ENCODE measurements at regions of chr2 and their contacts with region 1.

Region 1: DNA sequence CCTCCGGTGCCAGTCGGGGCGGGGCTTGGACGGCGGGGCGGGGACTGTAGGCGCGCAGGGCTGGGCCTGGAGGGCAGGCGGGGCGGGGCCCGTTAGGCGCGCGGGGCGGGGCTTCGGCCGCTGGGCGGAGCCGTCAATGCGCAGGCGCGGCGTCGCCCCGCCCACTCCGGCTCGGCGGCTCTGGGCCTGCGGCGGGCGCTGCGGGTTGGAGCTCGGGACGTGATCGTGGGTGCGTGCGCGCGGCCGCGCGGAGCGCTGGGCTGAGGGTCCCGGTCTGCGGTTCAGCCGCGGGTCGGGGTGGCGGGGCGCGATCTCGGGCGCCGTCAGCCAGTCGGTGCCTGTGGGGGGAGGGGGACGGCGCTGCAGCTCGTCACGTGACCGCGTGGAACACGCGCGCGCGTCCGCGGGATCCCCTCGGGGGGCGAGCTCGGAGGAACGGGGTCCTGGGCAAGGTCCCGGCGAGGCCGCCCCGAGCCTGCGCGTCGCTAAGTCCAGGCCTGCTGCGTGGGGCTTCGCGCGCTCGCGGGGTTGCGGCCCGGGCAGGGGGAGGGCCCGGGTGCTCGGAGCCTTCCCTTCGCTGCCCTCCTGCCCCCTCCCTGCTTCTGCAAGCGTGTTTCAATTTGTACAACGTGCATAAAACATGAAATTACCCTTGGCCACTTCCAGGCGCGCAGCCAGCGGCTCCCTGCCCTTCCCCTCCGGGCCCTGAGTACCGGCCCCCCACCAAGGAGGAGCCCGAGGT is at the start of gene D2HGDH:
- DNase-seq: peak; percentile 80
- ATAC-seq: peak; percentile 81
- H3K4me3 ChIP-seq: peak within 1 kb of the TSS; percentile 80 to 100 (median 96)
- H3K27ac ChIP-seq: peak within 1 kb of the TSS; percentile 91
- H3K4me1 ChIP-seq: peaks cover 28% of the 10 kb centered on the region
- H3K27me3 ChIP-seq: no peaks in the 10 kb centered on the region; a peak in 2 of 5 replicates
- CTCF ChIP-seq: no peak
- EP300 ChIP-seq: peak in 1 of 2 experiments; percentile 4; a peak in 1 of 4 replicates
- POLR2A ChIP-seq: peak in 1 of 2 experiments; percentile 75; a peak in 1 of 4 replicates
- RAD21 ChIP-seq: peak; percentile 64
- total RNA-seq, gene D2HGDH: 10.2 and 20.3 TPM in 2 replicates

Region 2: DNA sequence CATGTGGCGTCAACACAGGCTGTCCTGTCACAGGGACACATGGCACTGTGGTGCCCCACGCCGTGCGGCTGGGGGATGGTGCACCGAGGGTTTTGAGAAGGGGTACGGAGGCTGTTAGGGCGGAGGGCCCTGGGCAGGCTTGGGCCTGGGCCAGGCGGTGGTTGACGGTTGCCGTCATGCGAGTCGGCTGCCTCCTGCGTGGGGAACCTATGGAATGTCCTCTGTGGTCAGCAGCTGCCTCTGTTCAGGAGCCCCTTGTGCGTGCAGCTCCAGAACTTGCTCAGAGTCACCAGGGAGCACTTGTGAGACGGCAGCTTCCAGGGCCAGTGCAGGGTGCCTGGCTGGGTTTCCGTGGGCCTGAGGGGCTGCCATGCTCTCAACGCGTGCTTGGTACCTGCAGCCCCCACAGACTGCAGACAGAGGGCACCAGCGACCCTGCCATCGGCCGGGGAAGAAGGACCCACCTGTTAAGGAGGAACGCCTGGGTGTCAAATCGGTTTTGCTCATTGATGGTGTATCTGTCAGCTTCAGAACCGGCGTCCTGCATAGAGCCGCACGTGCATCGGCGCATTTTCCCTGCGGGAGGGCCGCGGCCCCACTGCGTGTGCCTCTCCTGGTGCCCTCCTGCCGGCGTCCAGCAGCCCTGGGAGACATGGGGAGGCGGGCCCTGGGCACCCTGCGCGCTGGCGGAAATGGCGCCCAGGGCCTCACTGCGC is 10.2 kb before region 1 on chr2:
- CTCF ChIA-PET with region 1: no interaction called
- POLR2A ChIA-PET with region 1: interaction called, 13 read pairs
- in situ Hi-C with region 1: no loop called
- intact Hi-C with region 1: no loop called
- DNase-seq: no peak
- ATAC-seq: peak; percentile 61
- H3K4me3 ChIP-seq: no peak overlapping the region
- H3K27ac ChIP-seq: no peak overlapping the region
- H3K4me1 ChIP-seq: no peaks in the 10 kb centered on the region
- H3K27me3 ChIP-seq: no peaks in the 10 kb centered on the region
- CTCF ChIP-seq: peak; percentile 89
- EP300 ChIP-seq: no peak
- POLR2A ChIP-seq: no peak
- RAD21 ChIP-seq: peak; percentile 74

Region 3: GRCh38 chr2:241810307-241811210 is 75.9 kb after region 1 on chr2:
- CTCF ChIA-PET with region 1: no interaction called
- POLR2A ChIA-PET with region 1: interaction called, 25 read pairs
- in situ Hi-C with region 1: no loop called
- intact Hi-C with region 1: no loop called
- DNase-seq: no peak
- ATAC-seq: no peak
- H3K4me3 ChIP-seq: peak overlapping the region; percentile 73 to 85 (median 81)
- H3K27ac ChIP-seq: peak overlapping the region; percentile 84
- H3K4me1 ChIP-seq: peaks cover 36% of the 10 kb centered on the region
- H3K27me3 ChIP-seq: no peaks in the 10 kb centered on the region; a peak in 1 of 5 replicates
- CTCF ChIP-seq: no peak
- EP300 ChIP-seq: no peak
- POLR2A ChIP-seq: no peak
- RAD21 ChIP-seq: no peak

Region 4: GRCh38 chr2:241877989-241878970 is 143.6 kb after region 1 on chr2:
- CTCF ChIA-PET with region 1: no interaction called
- POLR2A ChIA-PET with region 1: interaction called, 4 read pairs
- in situ Hi-C with region 1: loop called (anchors 10 kb)
- intact Hi-C with region 1: no loop called
- DNase-seq: peak; percentile 58
- ATAC-seq: peak; percentile 58
- H3K4me3 ChIP-seq: no peak overlapping the region
- H3K27ac ChIP-seq: no peak overlapping the region
- H3K4me1 ChIP-seq: peaks cover 21% of the 10 kb centered on the region
- H3K27me3 ChIP-seq: peaks cover 7 to 23% of the 10 kb centered on the region in 2 experiments
- CTCF ChIP-seq: peak; percentile 87
- EP300 ChIP-seq: no peak
- POLR2A ChIP-seq: no peak
- RAD21 ChIP-seq: peak; percentile 58; the same call in 1 of the 2 replicates